Stomach (tissue), 19 donors: ENCODE measurements at regions of chr7 and their contacts with region 1.

Region 1: GRCh38 chr7:148962823-148963582 is 65.3 kb downstream of the PDIA4 start:
- DNase-seq: peak; percentile 61 to 92
- H3K4me3 ChIP-seq: peak overlapping the region; percentile 48 to 67 (median 57)
- H3K27ac ChIP-seq: peak overlapping the region; percentile 53 to 82 (median 69)
- H3K4me1 ChIP-seq: peaks cover 9 to 32% (median 25%) of the 10 kb centered on the region in 4 donors
- H3K27me3 ChIP-seq: no peaks in the 10 kb centered on the region
- CTCF ChIP-seq: peak in 5 of 7 experiments; percentile 33 to 92 (median 67)
- EP300 ChIP-seq: no peak
- POLR2A ChIP-seq: no peak

Region 2: GRCh38 chr7:148575640-148576411 is 387.2 kb before region 1 on chr7:
- intact Hi-C with region 1: loop called (anchors 5 kb)
- DNase-seq: peak; percentile 80 to 84
- H3K4me3 ChIP-seq: no peak overlapping the region
- H3K27ac ChIP-seq: no peak overlapping the region
- H3K4me1 ChIP-seq: peaks cover 0 to 6% (median 2%) of the 10 kb centered on the region in 4 donors
- H3K27me3 ChIP-seq: no peaks in the 10 kb centered on the region
- CTCF ChIP-seq: peak in 5 of 7 experiments; percentile 59 to 86 (median 76)
- EP300 ChIP-seq: no peak
- POLR2A ChIP-seq: no peak